PC-9 (cell line): ENCODE measurements at regions of chr16 and their contacts with region 1.

Region 1: DNA sequence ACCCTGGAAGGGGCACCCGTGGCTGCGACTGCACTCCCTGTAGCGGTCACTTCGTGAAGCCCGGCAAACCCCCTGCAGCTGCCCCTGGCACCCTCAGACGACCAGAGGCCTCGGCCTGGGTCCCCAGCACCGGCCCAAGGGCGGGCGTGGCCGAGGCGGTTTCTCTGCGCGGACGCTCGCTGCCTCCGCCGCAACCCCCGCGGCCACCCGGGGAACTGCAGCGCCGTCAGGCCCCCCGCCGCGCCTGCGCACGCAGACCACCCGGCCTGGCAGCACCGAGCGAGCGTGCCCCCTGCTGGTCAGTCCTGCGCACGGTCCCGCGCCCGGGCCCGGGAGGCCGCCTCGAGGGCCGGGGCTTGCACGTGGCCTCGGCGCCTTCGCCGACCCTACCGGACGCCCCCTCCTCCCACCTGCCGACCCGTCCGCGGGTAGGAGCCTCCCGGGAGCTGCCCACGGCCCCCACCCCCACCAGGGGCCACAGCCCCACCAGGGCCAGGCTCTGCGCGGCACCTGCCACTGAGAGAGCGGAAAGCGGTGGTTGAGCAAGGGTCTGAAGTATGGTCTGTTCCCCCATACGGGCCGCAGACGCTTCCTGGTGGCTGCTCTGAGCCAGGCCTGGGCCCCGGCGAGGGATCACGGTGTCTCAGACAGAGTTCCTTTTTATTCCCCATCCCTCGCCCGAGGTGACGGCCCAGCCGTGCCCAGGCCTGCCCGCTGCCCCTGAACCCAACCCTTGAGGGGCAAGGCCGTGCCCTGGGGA is 11.5 kb upstream of the HS3ST6 start:
- DNase-seq: peak; percentile 50 to 94
- H3K4me3 ChIP-seq: peak overlapping the region; percentile 67
- H3K27ac ChIP-seq: no peak overlapping the region
- H3K4me1 ChIP-seq: peaks cover under 1% of the 10 kb centered on the region; the same call in 1 of the 2 replicates
- H3K27me3 ChIP-seq: no peaks in the 10 kb centered on the region
- CTCF ChIP-seq: peak; percentile 87; the same call in 1 of the 2 replicates

Region 2: DNA sequence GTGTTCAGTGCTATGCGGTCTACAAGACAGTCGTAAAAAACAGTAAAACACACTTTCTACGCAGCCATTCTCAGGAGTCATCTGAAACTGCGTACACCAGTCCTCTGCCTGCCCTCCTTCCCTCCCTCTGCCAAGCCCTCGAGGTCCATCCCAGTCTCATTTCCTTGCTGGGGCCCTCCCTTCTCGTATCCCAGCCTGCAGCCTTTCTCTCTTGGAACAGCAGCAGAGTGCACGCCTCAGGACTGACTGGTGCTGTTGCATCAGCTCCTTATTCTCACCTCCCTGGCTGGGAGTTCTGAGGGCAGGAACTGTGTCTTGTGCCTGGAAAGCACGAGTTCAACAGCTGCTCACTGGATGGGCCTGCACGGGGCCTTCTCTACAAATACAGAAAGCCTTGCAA is 90.2 kb before region 1 on chr16:
- CTCF ChIA-PET with region 1: no interaction called
- POLR2A ChIA-PET with region 1: interaction called, 20 read pairs
- intact Hi-C with region 1: no loop called
- DNase-seq: no peak
- H3K4me3 ChIP-seq: no peak overlapping the region
- H3K27ac ChIP-seq: no peak overlapping the region
- H3K4me1 ChIP-seq: no peaks in the 10 kb centered on the region
- H3K27me3 ChIP-seq: no peaks in the 10 kb centered on the region
- CTCF ChIP-seq: no peak

Region 3: DNA sequence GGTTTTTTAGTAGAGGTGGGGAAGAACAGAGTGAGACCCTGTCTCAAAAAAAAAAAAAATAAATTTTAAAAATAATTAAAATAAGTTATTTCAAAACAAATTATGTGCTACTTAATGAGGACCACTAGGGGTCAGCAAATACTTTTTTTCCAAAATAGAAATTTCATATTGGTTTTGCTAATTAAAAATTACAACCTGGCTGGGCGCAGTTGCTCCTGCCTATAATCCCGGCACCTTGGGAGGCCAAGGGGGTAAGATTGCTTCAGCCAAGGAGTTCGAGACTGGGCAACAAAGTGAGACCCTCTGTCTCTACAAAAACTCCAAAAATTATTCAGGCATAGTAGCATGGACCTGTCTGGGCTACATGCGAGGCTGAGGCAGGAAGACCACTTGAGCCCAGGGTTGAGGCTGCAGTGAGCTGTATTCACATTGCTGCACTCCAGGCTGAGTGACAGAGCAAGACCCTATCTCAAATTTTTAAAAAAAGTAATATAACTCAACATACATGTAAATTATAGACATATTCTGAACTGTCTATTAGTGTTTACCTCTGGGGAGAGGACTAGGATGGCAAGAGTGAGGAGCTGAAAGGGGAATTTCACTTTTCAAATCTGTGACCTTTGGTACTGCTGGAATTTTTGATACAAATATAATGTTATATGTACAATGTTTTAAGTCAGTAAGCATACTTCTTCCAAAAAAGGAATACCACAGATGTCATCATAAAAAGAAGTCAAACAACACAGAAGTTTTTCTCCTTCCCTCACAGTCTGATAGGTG is 65.9 kb before region 1 on chr16:
- CTCF ChIA-PET with region 1: interaction called, 4 read pairs
- POLR2A ChIA-PET with region 1: no interaction called
- intact Hi-C with region 1: loop called (anchors 2 kb)
- DNase-seq: peak in 1 of 2 experiments; percentile 11
- H3K4me3 ChIP-seq: no peak overlapping the region
- H3K27ac ChIP-seq: no peak overlapping the region
- H3K4me1 ChIP-seq: 0 out of 2 replicates have a peak, but pooled peaks cover under 1% of the 10 kb centered on the region
- H3K27me3 ChIP-seq: peaks cover 2% of the 10 kb centered on the region; the same call in 1 of the 2 replicates
- CTCF ChIP-seq: peak; percentile 80

Region 4: DNA sequence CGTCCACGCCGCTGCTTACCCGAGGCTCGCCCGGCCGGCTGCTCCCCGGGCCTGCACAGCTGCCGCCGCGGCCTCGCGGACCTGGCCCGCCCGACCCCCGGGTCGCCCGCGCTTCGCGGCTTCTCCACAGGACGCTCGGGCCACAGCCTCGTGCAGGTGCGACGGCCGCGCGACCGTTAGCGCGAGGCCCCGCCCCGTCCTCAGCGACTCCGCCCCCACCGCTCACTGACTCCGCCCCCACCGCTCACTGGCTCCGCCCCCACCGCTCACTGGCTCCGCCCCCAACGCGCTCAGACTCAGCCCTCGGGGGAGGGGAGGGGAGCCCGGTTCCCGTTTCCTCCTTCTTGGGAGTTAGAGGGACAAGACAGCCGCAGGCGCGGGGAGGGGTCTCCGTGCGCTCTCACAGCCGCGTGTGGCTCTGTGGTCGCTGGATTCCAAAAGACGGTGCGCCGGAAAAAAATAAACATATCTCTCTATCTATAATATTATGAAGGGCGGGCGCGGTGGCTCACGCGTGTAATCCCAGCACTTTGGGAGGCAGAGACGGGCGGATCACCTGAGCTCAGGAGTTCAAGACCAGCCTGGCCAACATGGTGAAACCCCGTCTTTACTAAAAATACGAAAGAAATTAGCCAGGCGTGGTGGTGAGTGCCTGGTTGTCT is 57.7 kb before region 1 on chr16 and contains the start of gene MEIOB:
- CTCF ChIA-PET with region 1: interaction called, 4 read pairs
- POLR2A ChIA-PET with region 1: no interaction called
- intact Hi-C with region 1: loop called (anchors 1 kb)
- DNase-seq: peak in 1 of 2 experiments; percentile 49
- H3K4me3 ChIP-seq: peak within 1 kb of the TSS; percentile 26; the same call in 1 of the 2 replicates
- H3K27ac ChIP-seq: peak within 1 kb of the TSS; percentile 88
- H3K4me1 ChIP-seq: peaks cover 19% of the 10 kb centered on the region
- H3K27me3 ChIP-seq: no peaks in the 10 kb centered on the region
- CTCF ChIP-seq: no peak
- total RNA-seq, gene MEIOB: not detected in 2 replicates